Prostate gland (tissue), 2 donors: ENCODE measurements at regions of chr22 and their contacts with region 1.

Region 1: DNA sequence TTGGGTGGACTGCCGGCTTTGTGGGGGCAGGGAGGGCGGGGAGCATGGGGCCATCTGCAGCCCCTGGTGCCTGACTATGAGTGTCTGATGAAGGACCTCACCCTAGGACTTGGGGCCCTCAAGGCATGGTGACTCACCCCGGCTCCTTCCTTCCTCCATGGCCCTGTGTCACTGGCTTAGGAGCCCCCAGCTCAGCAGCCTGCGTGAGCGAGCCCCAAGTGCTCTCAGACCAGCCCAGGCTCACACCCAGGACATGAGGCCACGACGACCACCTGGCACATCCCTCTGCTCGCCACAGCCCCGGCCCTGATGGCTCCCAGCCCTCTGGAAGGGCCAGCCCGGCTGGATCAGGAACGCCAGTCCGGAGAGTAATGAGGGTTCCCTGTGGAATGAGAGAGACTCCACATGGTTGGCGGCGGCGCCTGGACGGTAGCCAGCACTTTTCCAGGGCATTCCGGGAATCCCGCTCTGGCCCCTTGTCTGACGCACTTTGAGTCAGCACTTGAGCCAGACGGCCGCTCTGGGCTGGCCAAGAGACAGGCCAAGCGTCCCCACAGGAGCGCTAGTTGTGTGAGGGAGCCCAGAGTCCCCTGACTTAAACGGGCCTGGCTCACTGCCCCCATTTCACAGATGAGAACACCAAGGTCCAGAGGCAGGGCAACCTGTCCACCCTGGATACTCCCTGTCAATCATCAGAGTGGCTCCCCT is 50.7 kb upstream of the SHISAL1 start:
- DNase-seq: no peak
- H3K4me3 ChIP-seq: no peak overlapping the region
- H3K27ac ChIP-seq: no peak overlapping the region
- H3K4me1 ChIP-seq: no peaks in the 10 kb centered on the region
- H3K27me3 ChIP-seq: no peaks in the 10 kb centered on the region
- CTCF ChIP-seq: no peak
- POLR2A ChIP-seq: no peak

Region 2: DNA sequence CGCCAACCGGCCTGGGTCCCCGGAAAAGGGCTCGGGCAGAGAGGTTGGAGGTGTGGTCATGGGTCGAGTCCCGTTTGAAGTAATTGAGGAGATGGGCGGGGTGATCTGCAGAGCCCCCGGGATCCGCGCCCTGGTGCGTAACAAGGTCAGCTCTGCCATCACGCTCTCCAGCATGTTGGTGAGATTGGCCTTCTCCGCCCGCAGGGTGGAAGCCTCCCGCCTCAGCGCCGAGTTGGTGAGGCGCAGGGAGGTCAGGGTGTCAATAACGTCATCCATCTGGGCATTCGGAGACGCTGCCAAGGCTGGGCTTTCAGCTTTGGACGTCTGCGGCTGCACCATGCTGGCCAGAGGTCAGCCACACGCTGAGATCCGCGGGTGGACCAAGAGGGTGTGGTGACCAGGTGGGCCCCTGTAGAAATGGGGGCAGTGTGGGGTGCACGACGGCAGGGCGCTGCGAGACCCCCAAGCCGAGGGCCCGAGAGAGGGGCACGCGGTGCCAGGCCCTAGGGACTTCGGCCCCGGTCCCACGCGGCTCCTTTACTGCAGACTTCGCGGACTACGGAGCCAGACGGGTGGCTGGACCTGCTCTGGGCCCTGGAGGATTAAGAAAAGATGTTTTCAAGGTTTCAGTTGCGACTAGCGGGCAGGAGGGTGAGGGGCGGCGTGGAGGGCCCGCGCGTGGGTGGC is 133.9 kb after region 1 on chr22:
- intact Hi-C with region 1: loop called (anchors 5 kb)
- DNase-seq: no peak
- H3K4me3 ChIP-seq: peak overlapping the region; percentile 77 to 95
- H3K27ac ChIP-seq: peak overlapping the region; percentile 62 to 75
- H3K4me1 ChIP-seq: peaks cover 6% of the 10 kb centered on the region
- H3K27me3 ChIP-seq: no peaks in the 10 kb centered on the region
- CTCF ChIP-seq: no peak
- POLR2A ChIP-seq: no peak